WTC11 (cell line): ENCODE measurements at regions of chr18 and their contacts with region 1.

Region 1: GRCh38 chr18:41391616-41392595 is 563.1 kb upstream of the PIK3C3 start:
- DNase-seq: peak; percentile 72
- ATAC-seq: peak; percentile 91
- H3K4me3 Mint-ChIP-seq: peak overlapping the region; percentile 60
- H3K27ac Mint-ChIP-seq: peak overlapping the region; percentile 90
- H3K4me1 Mint-ChIP-seq: peaks cover 39% of the 10 kb centered on the region
- H3K27me3 Mint-ChIP-seq: no peaks in the 10 kb centered on the region
- CTCF ChIP-seq: peak; percentile 39; the same call in 1 of the 2 replicates

Region 2: DNA sequence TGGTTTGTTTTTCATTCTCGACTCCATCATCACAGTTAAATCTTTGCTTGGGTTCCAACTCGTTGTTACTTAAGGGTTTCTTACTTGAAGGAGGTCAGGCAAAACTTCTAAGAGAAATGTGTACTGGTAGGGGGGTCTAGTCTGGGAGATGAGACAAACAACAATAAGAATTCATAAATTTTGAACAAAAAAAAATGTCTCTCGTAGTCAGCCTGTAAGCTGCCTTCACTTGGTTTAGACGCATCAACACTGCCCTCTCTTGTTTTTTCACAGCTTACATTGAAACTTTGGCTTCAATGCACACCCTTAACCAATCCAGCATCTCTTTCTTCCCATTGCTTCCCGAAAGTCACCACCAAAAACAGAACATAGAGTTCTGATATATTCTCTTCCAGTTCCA is 13.3 kb before region 1 on chr18:
- CTCF ChIA-PET with region 1: interaction called, 10 read pairs
- POLR2A ChIA-PET with region 1: no interaction called
- DNase-seq: no peak
- ATAC-seq: peak; percentile 86
- H3K4me3 Mint-ChIP-seq: no peak overlapping the region
- H3K27ac Mint-ChIP-seq: peak overlapping the region; percentile 2; the same call in 1 of the 2 replicates
- H3K4me1 Mint-ChIP-seq: peaks cover 34% of the 10 kb centered on the region
- H3K27me3 Mint-ChIP-seq: no peaks in the 10 kb centered on the region
- CTCF ChIP-seq: no peak